A549 (cell line): ENCODE measurements at regions of chr2 and their contacts with region 1.

Region 1: GRCh38 chr2:121530212-121530705 is 421 bp upstream of the RNU4ATAC start:
- DNase-seq: peak; percentile 66 to 84
- ATAC-seq: peak; percentile 86
- H3K4me3 ChIP-seq: peak overlapping the region; percentile 61
- H3K27ac ChIP-seq: peak overlapping the region; percentile 91 to 99
- H3K4me1 ChIP-seq: peaks cover 28% of the 10 kb centered on the region
- CTCF ChIP-seq: no peak
- EP300 ChIP-seq: no peak
- POLR2A ChIP-seq: peak; percentile 42
- RAD21 ChIP-seq: no peak

Region 2: DNA sequence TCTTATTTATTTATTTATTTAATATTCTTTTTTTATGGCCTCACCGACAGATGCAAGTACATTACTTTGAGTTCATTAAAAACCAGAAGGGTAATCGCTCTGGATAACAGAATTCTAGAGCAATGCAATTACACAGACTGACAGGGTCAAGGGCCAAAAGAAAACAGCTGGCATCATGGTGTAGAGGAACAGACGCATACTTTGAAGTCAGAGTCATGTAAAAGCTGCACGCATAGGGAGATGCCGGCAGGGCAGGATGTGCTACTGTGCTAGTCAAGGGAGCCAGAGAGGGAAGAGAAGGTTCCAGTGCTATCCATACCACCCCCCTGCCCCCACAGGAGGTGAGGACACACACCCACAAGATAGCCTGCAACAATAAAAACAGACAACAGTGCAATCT is 130.1 kb before region 1 on chr2:
- CTCF ChIA-PET with region 1: interaction called, 6 read pairs
- POLR2A ChIA-PET with region 1: interaction called, 11 read pairs
- DNase-seq: no peak
- ATAC-seq: no peak
- H3K4me3 ChIP-seq: no peak overlapping the region
- H3K27ac ChIP-seq: no peak overlapping the region
- H3K4me1 ChIP-seq: no peaks in the 10 kb centered on the region
- CTCF ChIP-seq: no peak
- EP300 ChIP-seq: no peak
- POLR2A ChIP-seq: no peak
- RAD21 ChIP-seq: no peak

Region 3: GRCh38 chr2:121596221-121597080 is 66.2 kb after region 1 on chr2:
- CTCF ChIA-PET with region 1: interaction called, 5 read pairs
- POLR2A ChIA-PET with region 1: interaction called, 10 read pairs
- DNase-seq: peak; percentile 18 to 60
- ATAC-seq: peak; percentile 84 to 86; a peak in 5 of 6 replicates
- H3K4me3 ChIP-seq: no peak overlapping the region
- H3K27ac ChIP-seq: peak overlapping the region; percentile 47 to 58; a peak in 4 of 6 replicates
- H3K4me1 ChIP-seq: peaks cover 26% of the 10 kb centered on the region
- CTCF ChIP-seq: peak; percentile 63
- EP300 ChIP-seq: no peak
- POLR2A ChIP-seq: no peak
- RAD21 ChIP-seq: peak; percentile 54 to 57

Region 4: GRCh38 chr2:121608367-121608766 is 78.1 kb after region 1 on chr2:
- CTCF ChIA-PET with region 1: no interaction called
- POLR2A ChIA-PET with region 1: no interaction called
- DNase-seq: no peak
- ATAC-seq: no peak
- H3K4me3 ChIP-seq: no peak overlapping the region
- H3K27ac ChIP-seq: no peak overlapping the region
- H3K4me1 ChIP-seq: no peaks in the 10 kb centered on the region
- CTCF ChIP-seq: no peak
- EP300 ChIP-seq: no peak
- POLR2A ChIP-seq: no peak
- RAD21 ChIP-seq: no peak

Region 5: DNA sequence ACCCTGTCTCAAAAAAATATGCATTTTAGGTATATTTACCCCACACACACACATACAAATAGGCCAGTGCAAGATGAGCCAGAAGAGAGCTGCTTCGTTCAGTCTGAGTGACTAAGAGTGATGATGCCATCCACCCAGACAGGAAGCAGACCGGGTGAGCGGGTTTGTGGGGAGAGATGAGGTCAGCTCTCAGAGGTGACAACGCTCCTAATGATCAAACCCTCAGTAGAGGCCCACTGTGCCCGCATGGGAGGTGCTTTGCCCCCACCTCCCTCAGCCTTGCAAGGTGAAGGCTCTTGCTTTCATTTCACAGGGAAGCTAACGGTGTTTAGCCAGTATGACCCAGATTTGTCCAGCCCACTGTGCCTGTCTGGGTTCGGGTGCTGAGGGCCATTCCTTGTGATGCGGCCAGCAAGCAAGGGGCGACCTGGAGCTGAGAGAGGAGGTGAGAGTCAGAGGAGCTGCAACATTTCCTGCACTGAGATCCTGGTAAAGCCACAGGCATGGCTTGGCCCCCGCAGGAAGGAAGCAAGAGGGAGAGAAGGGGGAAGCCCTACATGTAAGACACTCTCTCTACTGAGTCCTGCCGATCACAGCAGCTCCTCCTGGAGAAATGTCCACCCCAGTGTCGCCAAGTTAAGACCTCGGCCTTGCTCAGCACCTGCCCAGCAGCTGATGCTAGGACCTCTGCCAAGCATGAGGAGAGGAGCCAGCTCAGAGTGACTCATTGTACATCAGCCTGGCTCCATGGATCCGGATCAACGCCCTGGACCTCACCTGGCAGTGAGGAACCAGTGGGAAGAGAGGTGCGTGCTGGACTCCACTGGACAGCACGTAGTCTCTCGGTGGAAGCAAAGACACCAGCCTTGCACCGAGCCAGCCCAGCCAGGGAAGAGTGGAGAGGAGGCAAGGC is 169.4 kb after region 1 on chr2:
- CTCF ChIA-PET with region 1: interaction called, 5 read pairs
- POLR2A ChIA-PET with region 1: interaction called, 24 read pairs
- DNase-seq: peak; percentile 76 to 78
- ATAC-seq: peak; percentile 94 to 98
- H3K4me3 ChIP-seq: 0 out of 3 replicates have a peak overlapping the region, but pooled peaks have one; percentile 20
- H3K27ac ChIP-seq: peak overlapping the region; percentile 73 to 87
- H3K4me1 ChIP-seq: peaks cover 30% of the 10 kb centered on the region
- CTCF ChIP-seq: no peak
- EP300 ChIP-seq: peak in 1 of 2 experiments; percentile 32; a peak in 1 of 5 replicates
- POLR2A ChIP-seq: no peak
- RAD21 ChIP-seq: no peak

Region 6: GRCh38 chr2:121736462-121737341 is 206.4 kb after region 1 on chr2 and contains the start of gene NIFK:
- CTCF ChIA-PET with region 1: interaction called, 3 read pairs
- POLR2A ChIA-PET with region 1: interaction called, 16 read pairs
- DNase-seq: peak; percentile 84 to 98
- ATAC-seq: peak; percentile 94 to 98
- H3K4me3 ChIP-seq: peak within 1 kb of the TSS; percentile 89
- H3K27ac ChIP-seq: peak within 1 kb of the TSS; percentile 88 to 94
- H3K4me1 ChIP-seq: peaks cover 14% of the 10 kb centered on the region; the same call in 1 of the 3 replicates
- CTCF ChIP-seq: no peak
- EP300 ChIP-seq: no peak
- POLR2A ChIP-seq: peak; percentile 76
- RAD21 ChIP-seq: no peak
- polyA plus RNA-seq, gene NIFK: 55.3 and 82.9 TPM in 2 replicates